Heart right ventricle (tissue), 16 donors: ENCODE measurements at regions of chr1 and their contacts with region 1.

Region 1: DNA sequence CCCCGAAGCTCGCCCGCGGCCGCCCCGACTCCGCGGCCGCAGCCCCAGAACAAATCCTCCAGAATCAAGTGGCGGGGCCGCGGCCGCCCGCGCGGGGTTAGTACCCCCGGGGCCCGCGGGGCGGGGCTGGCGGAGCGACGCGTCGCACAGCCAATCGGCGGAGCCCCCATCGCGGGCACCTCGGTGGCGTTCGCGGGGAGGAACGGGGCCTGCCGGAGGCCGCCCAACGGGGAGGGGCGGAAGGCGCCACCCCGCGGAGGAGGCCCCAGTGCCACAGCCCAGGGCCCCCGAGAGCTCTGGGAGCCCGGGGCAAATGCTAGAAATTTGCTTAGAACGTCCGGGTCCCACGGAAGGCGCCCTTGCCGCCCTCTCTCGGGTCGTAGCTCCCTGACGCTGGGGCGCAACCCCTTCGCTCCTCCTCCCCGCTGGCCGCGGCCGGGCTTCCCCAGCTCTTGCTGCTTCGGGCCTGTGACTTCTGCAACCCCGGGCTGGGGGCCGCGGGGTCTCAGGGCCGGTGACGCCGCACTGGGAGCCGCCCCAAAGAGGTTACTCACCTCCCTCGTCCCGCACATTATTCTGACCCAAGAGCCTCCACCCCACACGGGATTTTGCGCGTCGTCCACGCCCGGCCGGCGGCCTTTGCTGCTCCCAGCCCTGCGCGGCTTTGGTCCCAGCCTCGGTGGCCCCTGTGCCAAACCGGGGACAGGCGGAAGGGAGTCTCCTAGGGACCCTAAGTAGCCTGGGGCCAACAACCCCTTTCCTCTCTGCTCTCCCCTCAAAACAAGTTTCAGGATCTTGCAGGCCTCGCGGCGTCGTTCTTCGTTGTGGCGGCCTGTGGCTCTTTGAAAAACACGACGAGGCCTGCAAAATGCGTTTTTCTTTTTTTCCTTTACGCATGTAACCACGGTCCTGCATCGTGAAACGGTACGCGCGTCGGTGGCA is at the start of gene RUNX3:
- DNase-seq: peak in 1 of 2 donors; percentile 70
- ATAC-seq: peak in 5 of 8 donors; percentile 38 to 72 (median 65)
- H3K4me3 ChIP-seq: peak within 1 kb of the TSS in 9 of 10 donors; percentile 3 to 65 (median 35)
- H3K27ac ChIP-seq: peak within 1 kb of the TSS in 2 of 10 donors; percentile 22 to 91
- H3K4me1 ChIP-seq: peaks cover 5 to 61% (median 26%) of the 10 kb centered on the region in 9 donors
- H3K27me3 ChIP-seq: peaks cover 59 to 98% (median 97%) of the 10 kb centered on the region in 7 donors
- CTCF ChIP-seq: peak in 1 of 9 donors; percentile 35
- total RNA-seq, gene RUNX3: 0.15 to 5.9 (median 0.40) TPM

Region 2: DNA sequence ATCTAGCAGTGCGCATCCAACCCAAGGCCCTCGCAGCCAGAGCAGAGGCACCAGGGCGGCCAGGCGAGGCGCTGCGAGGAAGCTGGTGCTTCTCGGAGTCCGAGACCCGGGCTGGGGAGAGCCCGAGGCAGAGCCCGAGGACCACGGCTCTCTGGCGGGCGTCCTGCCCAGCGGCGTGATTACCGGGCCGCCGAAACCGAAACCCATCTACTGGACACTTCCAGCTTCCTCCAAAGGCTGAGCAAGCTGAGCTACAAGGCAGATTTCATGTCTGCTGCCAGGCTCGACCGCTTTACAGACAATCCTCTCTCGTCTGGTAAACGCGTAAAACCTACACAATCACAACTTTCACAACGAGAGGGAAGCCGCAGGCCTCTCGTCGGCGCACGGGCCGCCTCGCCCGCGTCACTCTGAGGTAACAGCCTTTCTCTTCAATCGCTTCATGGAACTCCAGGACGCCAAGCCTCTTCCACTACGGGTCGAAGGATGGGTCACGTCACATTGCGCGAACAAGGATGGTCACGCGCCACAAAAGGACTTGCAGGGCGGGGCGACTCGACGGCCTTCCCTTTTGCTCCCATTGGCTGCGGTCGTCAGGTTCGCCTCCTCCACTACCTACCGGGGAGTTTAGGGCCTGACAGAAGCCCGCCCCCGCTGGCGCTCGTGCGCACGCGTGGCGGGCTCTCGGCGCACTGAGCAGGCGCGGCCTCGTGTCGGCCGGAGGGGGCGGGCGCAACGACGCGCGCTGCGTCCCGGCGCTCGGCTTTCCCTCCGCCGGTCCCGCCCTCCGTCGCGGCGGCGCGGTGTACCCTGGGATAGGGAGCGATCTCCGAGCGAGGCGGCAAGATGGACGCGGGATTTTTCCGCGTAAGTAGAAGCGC is 287.8 kb before region 1 on chr1 and contains the start of gene SRRM1:
- intact Hi-C with region 1: no loop called
- DNase-seq: peak; percentile 98 to 100
- ATAC-seq: peak; percentile 95 to 98 (median 97)
- H3K4me3 ChIP-seq: peak within 1 kb of the TSS; percentile 62 to 99 (median 89)
- H3K27ac ChIP-seq: peak within 1 kb of the TSS; percentile 94 to 100 (median 98)
- H3K4me1 ChIP-seq: peaks cover 0 to 39% (median 28%) of the 10 kb centered on the region in 9 donors
- H3K27me3 ChIP-seq: no peaks in the 10 kb centered on the region
- CTCF ChIP-seq: peak in 3 of 9 donors; percentile 4 to 41 (median 32)
- total RNA-seq, gene SRRM1: 54.4 to 82.9 (median 75.8) TPM

Region 3: DNA sequence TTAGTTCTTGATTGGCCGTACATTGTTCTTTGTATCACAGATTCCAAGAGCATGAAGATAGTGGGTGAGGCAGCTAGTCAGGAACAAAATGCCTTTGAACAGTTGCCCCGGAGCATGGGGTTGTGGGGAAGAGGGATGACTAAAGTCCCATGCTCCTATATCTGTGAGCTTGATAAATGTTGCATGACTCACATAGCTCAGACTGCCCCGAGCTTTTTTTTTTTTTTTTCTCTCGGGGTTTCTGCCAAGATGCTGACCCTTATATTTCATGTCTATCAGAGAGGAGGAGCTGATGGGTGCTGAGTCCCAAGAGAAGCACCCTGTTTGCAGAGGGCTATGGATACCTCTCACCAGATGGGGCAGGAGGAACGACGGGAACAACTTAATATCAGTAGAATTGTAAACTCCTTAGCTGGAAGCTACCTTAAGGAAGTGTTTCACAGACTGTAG is 246.7 kb before region 1 on chr1:
- intact Hi-C with region 1: no loop called
- DNase-seq: no peak
- ATAC-seq: peak; percentile 37 to 85 (median 66)
- H3K4me3 ChIP-seq: peak overlapping the region in 1 of 10 donors; percentile 8
- H3K27ac ChIP-seq: peak overlapping the region in 7 of 10 donors; percentile 22 to 77 (median 48)
- H3K4me1 ChIP-seq: peaks cover 0 to 20% (median 5%) of the 10 kb centered on the region in 9 donors
- H3K27me3 ChIP-seq: no peaks in the 10 kb centered on the region
- CTCF ChIP-seq: no peak

Region 4: GRCh38 chr1:24861821-24862727 is 68.4 kb before region 1 on chr1:
- intact Hi-C with region 1: no loop called
- DNase-seq: no peak
- ATAC-seq: no peak
- H3K4me3 ChIP-seq: no peak overlapping the region
- H3K27ac ChIP-seq: no peak overlapping the region
- H3K4me1 ChIP-seq: no peaks in the 10 kb centered on the region
- H3K27me3 ChIP-seq: peaks cover 0 to 64% (median 58%) of the 10 kb centered on the region in 7 donors
- CTCF ChIP-seq: no peak

Region 5: GRCh38 chr1:25037174-25038074 is 106.9 kb after region 1 on chr1:
- intact Hi-C with region 1: loop called in 4 of 10 experiments (anchors 5 to 10 kb)
- DNase-seq: peak in 1 of 2 donors; percentile 34
- ATAC-seq: no peak
- H3K4me3 ChIP-seq: no peak overlapping the region
- H3K27ac ChIP-seq: peak overlapping the region in 1 of 10 donors; percentile 26
- H3K4me1 ChIP-seq: peaks cover 0 to 34% (median 0%) of the 10 kb centered on the region in 9 donors
- H3K27me3 ChIP-seq: peaks cover 0 to 32% (median 15%) of the 10 kb centered on the region in 7 donors
- CTCF ChIP-seq: peak in 8 of 9 donors; percentile 8 to 74 (median 38)

Region 6: GRCh38 chr1:25103164-25103795 is 172.8 kb after region 1 on chr1:
- intact Hi-C with region 1: loop called in 6 of 10 experiments (anchors 2 to 5 kb)
- DNase-seq: no peak
- ATAC-seq: peak in 2 of 8 donors; percentile 21 to 23
- H3K4me3 ChIP-seq: no peak overlapping the region
- H3K27ac ChIP-seq: no peak overlapping the region
- H3K4me1 ChIP-seq: peaks cover 0 to 19% (median 0%) of the 10 kb centered on the region in 9 donors
- H3K27me3 ChIP-seq: peaks cover 0 to 21% (median 10%) of the 10 kb centered on the region in 7 donors
- CTCF ChIP-seq: no peak

Region 7: DNA sequence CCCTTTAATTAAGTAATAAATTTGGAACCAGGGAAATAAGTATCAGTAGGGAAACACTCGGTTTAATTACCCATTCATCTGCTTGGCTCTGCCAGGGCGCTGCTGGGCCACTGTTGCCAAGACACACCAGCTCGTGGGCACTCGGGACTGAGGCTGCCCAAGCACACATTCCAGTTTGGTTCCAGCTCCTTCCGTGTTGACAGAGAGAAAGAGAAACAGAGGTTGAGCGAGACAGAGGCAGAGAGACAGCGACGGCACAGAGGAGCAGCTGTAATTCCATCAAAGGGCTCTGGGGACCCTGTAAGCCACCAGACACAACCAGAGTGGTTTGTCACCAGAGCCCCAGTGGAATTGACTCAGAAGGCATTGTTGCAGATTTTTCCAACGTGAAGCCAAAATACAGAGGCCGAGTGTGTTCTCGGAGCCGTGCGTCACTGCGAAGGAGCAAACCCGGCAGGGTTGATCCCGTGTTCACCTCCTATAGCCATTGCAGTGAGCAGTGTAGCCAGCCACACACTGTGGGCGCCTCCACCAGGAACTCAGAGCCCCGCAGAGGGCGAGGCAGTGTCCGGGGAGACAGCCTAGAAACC is 268.3 kb after region 1 on chr1:
- intact Hi-C with region 1: loop called in 7 of 10 experiments (anchors 5 to 10 kb)
- DNase-seq: peak; percentile 20 to 44
- ATAC-seq: peak; percentile 43 to 85 (median 74)
- H3K4me3 ChIP-seq: peak overlapping the region in 2 of 10 donors; percentile 1 to 7
- H3K27ac ChIP-seq: peak overlapping the region in 2 of 10 donors; percentile 1 to 28
- H3K4me1 ChIP-seq: peaks cover 0 to 21% (median 12%) of the 10 kb centered on the region in 9 donors
- H3K27me3 ChIP-seq: peaks cover 0 to 20% (median 12%) of the 10 kb centered on the region in 7 donors
- CTCF ChIP-seq: peak in 2 of 9 donors; percentile 13 to 15

Region 8: DNA sequence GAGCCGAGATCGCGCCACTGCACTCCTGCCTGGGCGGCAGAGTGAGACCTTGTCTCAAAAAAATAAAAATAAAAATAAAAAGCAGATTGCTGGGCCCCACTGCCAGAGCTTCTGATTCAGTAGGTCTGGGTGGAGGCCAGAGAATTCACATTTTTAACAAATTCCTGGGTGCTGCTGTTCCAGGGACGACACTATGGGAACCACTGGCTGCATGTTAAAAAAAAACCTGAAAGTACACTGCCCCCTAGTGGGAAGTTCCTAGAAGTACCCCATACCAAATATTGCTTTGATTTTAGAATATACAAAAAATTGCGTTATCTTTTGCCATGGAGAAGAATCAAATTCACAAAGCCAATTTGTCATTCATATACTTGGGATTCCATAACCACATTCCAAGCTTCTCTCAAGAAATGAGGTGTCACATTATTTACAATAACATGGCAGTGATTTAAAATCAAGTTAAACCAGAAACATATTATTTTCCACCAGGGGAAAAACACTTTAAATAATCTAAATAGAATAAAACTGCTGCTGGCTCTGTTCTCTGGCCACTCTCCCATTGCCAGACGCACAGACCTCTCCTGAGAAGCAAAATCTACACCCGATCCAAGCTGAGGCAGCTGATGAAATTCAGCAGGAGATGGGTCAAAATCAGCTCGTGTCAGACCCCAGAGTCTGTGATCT is 274.5 kb after region 1 on chr1:
- intact Hi-C with region 1: loop called in 6 of 10 experiments (anchors 5 to 10 kb)
- DNase-seq: no peak
- ATAC-seq: peak in 1 of 8 donors; percentile 45
- H3K4me3 ChIP-seq: no peak overlapping the region
- H3K27ac ChIP-seq: no peak overlapping the region
- H3K4me1 ChIP-seq: peaks cover 0 to 2% (median 0%) of the 10 kb centered on the region in 9 donors
- H3K27me3 ChIP-seq: peaks cover 0 to 17% (median 2%) of the 10 kb centered on the region in 7 donors
- CTCF ChIP-seq: peak; percentile 60 to 84 (median 80)